CD4-positive, alpha-beta T cell (primary cell): ENCODE measurements at regions of chr19 and their contacts with region 1.

Region 1: DNA sequence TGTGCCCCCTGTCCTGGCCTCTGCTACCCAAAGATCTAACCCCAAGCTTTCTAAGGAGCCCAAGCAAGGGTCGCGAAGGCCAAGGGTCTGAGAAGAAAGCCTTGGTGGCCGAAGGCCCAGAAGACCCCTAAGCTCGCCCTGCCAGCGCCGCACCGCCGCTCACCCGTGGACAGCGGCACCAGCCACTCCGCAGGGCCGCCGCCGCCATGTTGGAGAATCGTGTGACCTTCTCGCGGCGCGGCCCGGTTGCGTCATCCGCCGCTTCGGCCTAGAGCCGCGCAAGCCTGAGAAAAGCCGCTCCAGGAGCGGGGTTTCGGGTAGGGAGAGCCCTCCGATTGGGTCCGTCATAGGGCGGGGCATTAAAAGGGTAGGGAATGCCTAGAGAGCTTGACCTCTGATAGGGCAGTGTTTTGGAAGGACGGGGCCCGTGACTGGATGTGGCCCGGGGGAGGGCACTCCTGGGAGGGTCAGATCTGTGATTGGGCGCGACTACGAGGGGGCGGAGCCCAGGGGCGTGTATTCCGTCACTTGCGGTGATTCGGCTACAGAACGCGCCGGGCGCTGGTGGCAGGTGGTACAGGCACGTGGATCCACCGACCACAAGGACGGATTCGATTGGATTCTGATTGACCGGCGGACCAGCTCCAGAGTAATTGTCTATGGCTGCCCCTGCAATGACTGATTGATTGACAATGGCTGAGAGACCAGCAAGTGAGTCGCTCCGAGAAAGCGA is at the start of gene TIMM44:
- DNase-seq: peak; percentile 95 to 100 (median 97)
- ATAC-seq: peak; percentile 96
- H3K4me3 ChIP-seq: peak within 1 kb of the TSS; percentile 97
- H3K4me3 Mint-ChIP-seq: peak within 1 kb of the TSS; percentile 95
- H3K27ac ChIP-seq: peak within 1 kb of the TSS; percentile 96 to 97
- H3K27ac Mint-ChIP-seq: peak within 1 kb of the TSS; percentile 87
- H3K4me1 ChIP-seq: peaks cover 30% of the 10 kb centered on the region
- H3K4me1 Mint-ChIP-seq: peaks cover 36% of the 10 kb centered on the region
- H3K27me3 ChIP-seq: no peaks in the 10 kb centered on the region
- H3K27me3 Mint-ChIP-seq: no peaks in the 10 kb centered on the region
- CTCF ChIP-seq: no peak
- total RNA-seq, gene TIMM44: 83.9 to 85.0 TPM

Region 2: GRCh38 chr19:7197760-7198696 is 745.6 kb before region 1 on chr19:
- CTCF ChIA-PET with region 1: no interaction called
- POLR2A ChIA-PET with region 1: interaction called, 3 read pairs
- intact Hi-C with region 1: loop called in 1 of 2 experiments (anchors 10 kb)
- DNase-seq: peak; percentile 74 to 98 (median 88)
- ATAC-seq: peak; percentile 85
- H3K4me3 ChIP-seq: peak overlapping the region; percentile 65
- H3K4me3 Mint-ChIP-seq: peak overlapping the region; percentile 95
- H3K27ac ChIP-seq: peak overlapping the region; percentile 48 to 68
- H3K27ac Mint-ChIP-seq: peak overlapping the region; percentile 89
- H3K4me1 ChIP-seq: peaks cover 23% of the 10 kb centered on the region
- H3K4me1 Mint-ChIP-seq: peaks cover 12% of the 10 kb centered on the region
- H3K27me3 ChIP-seq: peaks cover 0 to 7% of the 10 kb centered on the region in 2 experiments
- H3K27me3 Mint-ChIP-seq: peaks cover 9% of the 10 kb centered on the region
- CTCF ChIP-seq: no peak

Region 3: DNA sequence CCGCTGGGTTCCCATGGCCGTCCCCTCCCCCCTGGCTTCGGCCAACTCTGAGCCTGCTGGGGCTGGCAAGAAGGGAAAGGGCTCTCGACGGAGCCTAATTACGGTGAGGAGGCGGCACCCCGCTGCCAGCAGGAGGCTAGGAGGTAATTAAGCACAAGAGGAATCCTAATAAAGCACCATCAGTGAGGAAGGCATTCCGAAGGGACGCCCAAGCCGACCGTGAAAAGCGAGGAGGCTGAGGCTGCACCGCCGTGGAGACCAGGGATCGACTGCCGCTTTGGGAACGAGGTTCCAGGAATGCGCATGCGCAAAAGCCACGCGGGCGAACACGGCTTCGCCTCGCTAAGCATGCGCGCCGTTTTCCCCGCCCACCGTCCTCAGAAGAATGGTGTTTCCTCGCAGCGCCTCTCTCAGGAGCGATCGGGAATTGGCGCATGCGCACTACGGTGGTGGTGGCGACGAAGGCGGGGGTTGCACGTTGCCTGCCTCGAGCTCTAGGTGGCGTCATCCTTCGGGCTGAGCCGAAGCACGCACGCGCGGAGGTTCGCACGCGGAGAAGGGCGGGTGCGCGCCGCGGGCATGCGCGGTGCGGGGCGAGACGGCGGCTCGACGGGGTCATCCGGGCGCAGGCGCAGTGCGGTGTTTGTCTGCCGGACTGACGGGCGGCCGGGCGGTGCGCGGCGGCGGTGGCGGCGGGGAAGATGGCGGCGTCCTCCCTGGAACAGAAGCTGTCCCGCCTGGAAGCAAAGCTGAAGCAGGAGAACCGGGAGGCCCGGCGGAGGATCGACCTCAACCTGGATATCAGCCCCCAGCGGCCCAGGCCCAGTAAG is 40.2 kb before region 1 on chr19 and contains the start of gene MAP2K7:
- CTCF ChIA-PET with region 1: interaction called, 5 read pairs
- POLR2A ChIA-PET with region 1: interaction called, 12 read pairs
- intact Hi-C with region 1: loop called in 1 of 2 experiments (anchors 5 kb)
- DNase-seq: peak; percentile 100
- ATAC-seq: peak; percentile 87
- H3K4me3 ChIP-seq: peak within 1 kb of the TSS; percentile 85
- H3K4me3 Mint-ChIP-seq: peak within 1 kb of the TSS; percentile 92
- H3K27ac ChIP-seq: peak within 1 kb of the TSS; percentile 68 to 87
- H3K27ac Mint-ChIP-seq: peak within 1 kb of the TSS; percentile 89
- H3K4me1 ChIP-seq: peaks cover 48% of the 10 kb centered on the region
- H3K4me1 Mint-ChIP-seq: peaks cover 26% of the 10 kb centered on the region
- H3K27me3 ChIP-seq: no peaks in the 10 kb centered on the region
- H3K27me3 Mint-ChIP-seq: peaks cover 6% of the 10 kb centered on the region
- CTCF ChIP-seq: peak; percentile 73
- total RNA-seq, gene MAP2K7: 81.7 to 82.3 TPM

Region 4: DNA sequence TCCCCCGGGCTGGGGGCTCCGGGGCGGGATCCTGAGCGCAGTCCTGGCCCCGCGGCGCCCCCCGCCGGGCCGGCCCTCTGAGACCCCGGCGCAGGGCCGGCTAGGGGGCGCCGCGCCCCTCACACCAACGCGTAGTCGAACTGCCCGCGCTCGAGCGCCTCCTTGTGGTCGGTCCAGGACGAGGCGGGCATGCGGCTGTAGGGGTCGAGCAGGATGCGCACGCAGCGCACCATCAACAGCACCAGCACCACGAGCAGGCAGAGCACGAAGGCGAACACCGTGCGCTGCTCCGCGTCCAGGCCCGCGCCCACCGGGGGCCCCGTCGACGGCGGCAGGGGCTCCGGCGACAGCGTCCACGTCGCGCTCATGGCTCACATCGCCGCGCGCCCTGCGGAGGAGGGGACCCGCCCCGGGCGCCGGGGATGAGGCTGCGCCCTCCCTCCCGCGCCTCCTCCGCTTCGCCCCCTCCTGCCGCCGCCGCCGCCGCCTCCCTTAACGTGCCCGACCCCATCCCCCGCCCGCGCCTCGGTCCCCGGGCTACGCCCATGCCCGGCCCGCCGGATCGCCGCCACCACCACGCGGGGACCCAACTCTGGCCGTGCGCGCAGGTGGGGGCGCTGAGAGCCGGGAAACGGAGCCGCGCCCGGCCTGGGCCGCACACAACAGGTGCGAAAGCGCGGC is 18.3 kb before region 1 on chr19:
- CTCF ChIA-PET with region 1: interaction called, 36 read pairs
- POLR2A ChIA-PET with region 1: interaction called, 47 read pairs
- intact Hi-C with region 1: loop called in 1 of 2 experiments (anchors 2 kb)
- DNase-seq: peak; percentile 62 to 90 (median 70)
- ATAC-seq: peak; percentile 19
- H3K4me3 ChIP-seq: no peak overlapping the region
- H3K4me3 Mint-ChIP-seq: peak overlapping the region; percentile 90
- H3K27ac ChIP-seq: no peak overlapping the region
- H3K27ac Mint-ChIP-seq: no peak overlapping the region
- H3K4me1 ChIP-seq: peaks cover 43% of the 10 kb centered on the region
- H3K4me1 Mint-ChIP-seq: peaks cover 23% of the 10 kb centered on the region
- H3K27me3 ChIP-seq: no peaks in the 10 kb centered on the region
- H3K27me3 Mint-ChIP-seq: no peaks in the 10 kb centered on the region
- CTCF ChIP-seq: peak; percentile 71

Region 5: GRCh38 chr19:7978179-7978825 is 34.7 kb after region 1 on chr19:
- CTCF ChIA-PET with region 1: no interaction called
- POLR2A ChIA-PET with region 1: no interaction called
- intact Hi-C with region 1: no loop called
- DNase-seq: no peak
- ATAC-seq: no peak
- H3K4me3 ChIP-seq: no peak overlapping the region
- H3K4me3 Mint-ChIP-seq: no peak overlapping the region
- H3K27ac ChIP-seq: no peak overlapping the region
- H3K27ac Mint-ChIP-seq: no peak overlapping the region
- H3K4me1 ChIP-seq: no peaks in the 10 kb centered on the region
- H3K4me1 Mint-ChIP-seq: no peaks in the 10 kb centered on the region
- H3K27me3 ChIP-seq: no peaks in the 10 kb centered on the region
- H3K27me3 Mint-ChIP-seq: no peaks in the 10 kb centered on the region
- CTCF ChIP-seq: no peak

Region 6: GRCh38 chr19:8158411-8159074 is 214.9 kb after region 1 on chr19:
- CTCF ChIA-PET with region 1: no interaction called
- POLR2A ChIA-PET with region 1: no interaction called
- intact Hi-C with region 1: loop called in 1 of 2 experiments (anchors 10 kb)
- DNase-seq: peak in 11 of 14 experiments; percentile 9 to 85 (median 36)
- ATAC-seq: peak; percentile 57
- H3K4me3 ChIP-seq: no peak overlapping the region
- H3K4me3 Mint-ChIP-seq: no peak overlapping the region
- H3K27ac ChIP-seq: no peak overlapping the region
- H3K27ac Mint-ChIP-seq: no peak overlapping the region
- H3K4me1 ChIP-seq: no peaks in the 10 kb centered on the region
- H3K4me1 Mint-ChIP-seq: no peaks in the 10 kb centered on the region
- H3K27me3 ChIP-seq: peaks cover 9 to 10% of the 10 kb centered on the region in 2 experiments
- H3K27me3 Mint-ChIP-seq: peaks cover 24% of the 10 kb centered on the region
- CTCF ChIP-seq: peak; percentile 75

Region 7: GRCh38 chr19:8389891-8390616 is 446.4 kb after region 1 on chr19 and contains the start of gene RAB11B:
- CTCF ChIA-PET with region 1: no interaction called
- POLR2A ChIA-PET with region 1: no interaction called
- intact Hi-C with region 1: loop called in 1 of 2 experiments (anchors 10 kb)
- DNase-seq: peak; percentile 93 to 100 (median 97)
- ATAC-seq: peak; percentile 89
- H3K4me3 ChIP-seq: peak within 1 kb of the TSS; percentile 82
- H3K4me3 Mint-ChIP-seq: peak within 1 kb of the TSS; percentile 95
- H3K27ac ChIP-seq: peak within 1 kb of the TSS; percentile 91 to 92
- H3K27ac Mint-ChIP-seq: peak within 1 kb of the TSS; percentile 86
- H3K4me1 ChIP-seq: peaks cover 27% of the 10 kb centered on the region
- H3K4me1 Mint-ChIP-seq: peaks cover 28% of the 10 kb centered on the region
- H3K27me3 ChIP-seq: no peaks in the 10 kb centered on the region
- H3K27me3 Mint-ChIP-seq: no peaks in the 10 kb centered on the region
- CTCF ChIP-seq: no peak
- total RNA-seq, gene RAB11B: 66.8 to 71.5 TPM